GM12878 (cell line): ENCODE measurements at regions of chr20 and their contacts with region 1.

Region 1: GRCh38 chr20:5844063-5844681 is 94.0 kb downstream of the SHLD1 start:
- DNase-seq: peak; percentile 78
- ATAC-seq: peak; percentile 87
- H3K4me3 ChIP-seq: peak overlapping the region; percentile 24; the same call in 1 of the 2 replicates
- H3K27ac ChIP-seq: no peak overlapping the region
- H3K4me1 ChIP-seq: peaks cover 31% of the 10 kb centered on the region
- H3K27me3 ChIP-seq: no peaks in the 10 kb centered on the region
- CTCF ChIP-seq: no peak
- EP300 ChIP-seq: peak; percentile 56 to 62; a peak in 2 of 4 replicates
- POLR2A ChIP-seq: no peak
- RAD21 ChIP-seq: no peak

Region 2: GRCh38 chr20:5797843-5798462 is 46.2 kb before region 1 on chr20:
- CTCF ChIA-PET with region 1: interaction called, 7 read pairs
- POLR2A ChIA-PET with region 1: interaction called, 3 read pairs
- RAD21 ChIA-PET with region 1: interaction called, 14 read pairs
- SMC1A ChIA-PET with region 1: interaction called, 12 read pairs
- in situ Hi-C with region 1: no loop called
- intact Hi-C with region 1: no loop called
- DNase-seq: peak; percentile 86
- ATAC-seq: peak; percentile 98
- H3K4me3 ChIP-seq: no peak overlapping the region
- H3K27ac ChIP-seq: peak overlapping the region; percentile 92
- H3K4me1 ChIP-seq: peaks cover 15% of the 10 kb centered on the region
- H3K27me3 ChIP-seq: no peaks in the 10 kb centered on the region
- CTCF ChIP-seq: no peak
- EP300 ChIP-seq: no peak
- POLR2A ChIP-seq: no peak; the same call in 1 of the 2 replicates
- RAD21 ChIP-seq: no peak

Region 3: DNA sequence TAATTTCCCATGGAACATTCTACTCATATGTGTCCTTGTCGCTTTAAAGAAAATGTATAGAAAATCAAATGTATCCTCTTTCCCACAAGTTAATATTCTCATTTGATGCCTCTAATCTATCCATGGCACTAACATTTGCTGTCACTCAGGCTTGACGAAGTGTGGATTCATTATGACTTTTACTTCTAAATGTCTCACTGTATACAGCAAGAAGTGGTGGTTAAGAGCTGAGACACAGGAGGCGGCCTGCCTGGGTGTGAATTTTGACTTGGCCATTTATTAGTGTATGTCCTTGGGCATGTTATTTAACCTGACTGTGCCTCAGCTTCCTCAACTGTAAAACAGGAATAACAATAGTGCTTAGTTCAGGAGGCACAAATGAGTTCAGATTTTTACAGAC is 36.2 kb after region 1 on chr20:
- CTCF ChIA-PET with region 1: interaction called, 5 read pairs
- POLR2A ChIA-PET with region 1: interaction called, 3 read pairs
- RAD21 ChIA-PET with region 1: interaction called, 4 read pairs
- SMC1A ChIA-PET with region 1: interaction called, 14 read pairs
- in situ Hi-C with region 1: no loop called
- intact Hi-C with region 1: no loop called
- DNase-seq: no peak
- ATAC-seq: peak; percentile 45
- H3K4me3 ChIP-seq: no peak overlapping the region
- H3K27ac ChIP-seq: no peak overlapping the region
- H3K4me1 ChIP-seq: no peaks in the 10 kb centered on the region
- H3K27me3 ChIP-seq: peaks cover 0 to 6% of the 10 kb centered on the region in 2 experiments; a peak in 3 of 4 replicates
- CTCF ChIP-seq: no peak
- EP300 ChIP-seq: no peak
- POLR2A ChIP-seq: no peak
- RAD21 ChIP-seq: no peak

Region 4: GRCh38 chr20:6008254-6008653 is 164.1 kb after region 1 on chr20:
- CTCF ChIA-PET with region 1: no interaction called
- POLR2A ChIA-PET with region 1: no interaction called
- RAD21 ChIA-PET with region 1: no interaction called
- SMC1A ChIA-PET with region 1: no interaction called
- in situ Hi-C with region 1: no loop called
- intact Hi-C with region 1: loop called (anchors 2 kb)
- DNase-seq: no peak
- ATAC-seq: no peak
- H3K4me3 ChIP-seq: peak overlapping the region; percentile 12; the same call in 1 of the 2 replicates
- H3K27ac ChIP-seq: no peak overlapping the region; the same call in 1 of the 2 replicates
- H3K4me1 ChIP-seq: peaks cover 2% of the 10 kb centered on the region; the same call in 1 of the 2 replicates
- H3K27me3 ChIP-seq: no peaks in the 10 kb centered on the region
- CTCF ChIP-seq: no peak
- EP300 ChIP-seq: no peak
- POLR2A ChIP-seq: no peak
- RAD21 ChIP-seq: no peak

Region 5: DNA sequence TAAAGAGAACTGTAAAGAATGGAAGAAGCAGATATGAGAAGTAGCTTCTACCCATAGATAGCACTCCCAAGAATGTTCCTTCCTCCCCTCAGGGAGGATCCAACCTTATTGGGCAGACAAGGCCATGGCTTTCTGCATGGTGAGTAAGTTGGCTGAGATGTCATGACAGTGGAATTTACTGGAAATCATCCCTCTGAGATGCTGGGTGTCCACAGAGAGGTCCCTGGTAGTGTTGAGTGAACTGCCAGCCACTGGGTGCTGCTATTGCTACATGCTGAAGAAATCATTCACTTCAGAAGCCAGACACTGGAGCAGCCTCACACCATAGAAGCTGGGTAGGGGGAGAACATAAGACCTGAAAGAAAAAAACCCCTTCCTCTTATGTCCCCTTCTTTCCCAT is 325.1 kb after region 1 on chr20:
- CTCF ChIA-PET with region 1: no interaction called
- POLR2A ChIA-PET with region 1: no interaction called
- RAD21 ChIA-PET with region 1: no interaction called
- SMC1A ChIA-PET with region 1: no interaction called
- in situ Hi-C with region 1: no loop called
- intact Hi-C with region 1: no loop called
- DNase-seq: no peak
- ATAC-seq: peak; percentile 56; the same call in 2 of the 3 replicates
- H3K4me3 ChIP-seq: no peak overlapping the region
- H3K27ac ChIP-seq: no peak overlapping the region
- H3K4me1 ChIP-seq: no peaks in the 10 kb centered on the region
- H3K27me3 ChIP-seq: no peaks in the 10 kb centered on the region
- CTCF ChIP-seq: peak in 1 of 3 experiments; percentile 11; a peak in 2 of 6 replicates
- EP300 ChIP-seq: no peak
- POLR2A ChIP-seq: no peak
- RAD21 ChIP-seq: no peak